CD4-positive, alpha-beta memory T cell (primary cell): ENCODE measurements at regions of chr6 and their contacts with region 1.

Region 1: GRCh38 chr6:166402582-166403277 is 20.0 kb upstream of the MPC1 start:
- DNase-seq: no peak
- H3K4me3 ChIP-seq: no peak overlapping the region
- H3K4me3 Mint-ChIP-seq: no peak overlapping the region
- H3K27ac ChIP-seq: no peak overlapping the region
- H3K27ac Mint-ChIP-seq: peak overlapping the region in 3 of 7 donors; percentile 43 to 72 (median 67)
- H3K4me1 ChIP-seq: no peaks in the 10 kb centered on the region
- H3K4me1 Mint-ChIP-seq: peaks cover 4 to 9% (median 7%) of the 10 kb centered on the region in 4 donors
- H3K27me3 ChIP-seq: no peaks in the 10 kb centered on the region
- H3K27me3 Mint-ChIP-seq: no peaks in the 10 kb centered on the region

Region 2: DNA sequence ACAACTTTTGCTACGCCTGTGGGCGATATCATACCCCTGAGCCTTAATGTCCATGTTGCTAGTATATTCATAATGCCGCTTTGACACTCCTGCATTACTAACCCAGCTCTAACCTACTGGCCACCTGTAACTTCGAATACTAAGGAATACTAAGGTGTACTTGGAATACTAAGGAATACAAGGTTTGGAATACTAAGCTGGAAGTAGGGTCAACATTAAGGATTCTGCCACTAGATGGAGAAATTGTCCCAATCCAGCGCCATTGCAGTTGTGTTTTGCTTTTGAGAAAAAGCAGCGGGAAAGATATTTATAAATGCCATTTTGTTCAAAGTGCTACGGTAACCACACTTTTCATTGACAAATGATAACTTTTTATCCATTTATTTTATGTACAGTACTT is 245.8 kb before region 1 on chr6:
- CTCF ChIA-PET with region 1: interaction called, 20 read pairs
- POLR2A ChIA-PET with region 1: interaction called, 3 read pairs
- intact Hi-C with region 1: loop called (anchors 2 kb)
- DNase-seq: no peak
- H3K4me3 ChIP-seq: no peak overlapping the region
- H3K4me3 Mint-ChIP-seq: no peak overlapping the region
- H3K27ac ChIP-seq: no peak overlapping the region
- H3K27ac Mint-ChIP-seq: no peak overlapping the region
- H3K4me1 ChIP-seq: no peaks in the 10 kb centered on the region
- H3K4me1 Mint-ChIP-seq: no peaks in the 10 kb centered on the region
- H3K27me3 ChIP-seq: no peaks in the 10 kb centered on the region
- H3K27me3 Mint-ChIP-seq: peaks cover 11 to 12% of the 10 kb centered on the region in 2 donors

Region 3: GRCh38 chr6:166275714-166276166 is 127.0 kb before region 1 on chr6:
- CTCF ChIA-PET with region 1: interaction called, 75 read pairs
- POLR2A ChIA-PET with region 1: no interaction called
- intact Hi-C with region 1: loop called (anchors 1 kb)
- DNase-seq: peak; percentile 57 to 84 (median 77)
- H3K4me3 ChIP-seq: no peak overlapping the region
- H3K4me3 Mint-ChIP-seq: no peak overlapping the region
- H3K27ac ChIP-seq: no peak overlapping the region
- H3K27ac Mint-ChIP-seq: peak overlapping the region in 1 of 7 donors; percentile 66
- H3K4me1 ChIP-seq: peaks cover 4% of the 10 kb centered on the region
- H3K4me1 Mint-ChIP-seq: peaks cover 0 to 8% (median 6%) of the 10 kb centered on the region in 4 donors
- H3K27me3 ChIP-seq: no peaks in the 10 kb centered on the region
- H3K27me3 Mint-ChIP-seq: peaks cover 0 to 3% of the 10 kb centered on the region in 2 donors

Region 4: DNA sequence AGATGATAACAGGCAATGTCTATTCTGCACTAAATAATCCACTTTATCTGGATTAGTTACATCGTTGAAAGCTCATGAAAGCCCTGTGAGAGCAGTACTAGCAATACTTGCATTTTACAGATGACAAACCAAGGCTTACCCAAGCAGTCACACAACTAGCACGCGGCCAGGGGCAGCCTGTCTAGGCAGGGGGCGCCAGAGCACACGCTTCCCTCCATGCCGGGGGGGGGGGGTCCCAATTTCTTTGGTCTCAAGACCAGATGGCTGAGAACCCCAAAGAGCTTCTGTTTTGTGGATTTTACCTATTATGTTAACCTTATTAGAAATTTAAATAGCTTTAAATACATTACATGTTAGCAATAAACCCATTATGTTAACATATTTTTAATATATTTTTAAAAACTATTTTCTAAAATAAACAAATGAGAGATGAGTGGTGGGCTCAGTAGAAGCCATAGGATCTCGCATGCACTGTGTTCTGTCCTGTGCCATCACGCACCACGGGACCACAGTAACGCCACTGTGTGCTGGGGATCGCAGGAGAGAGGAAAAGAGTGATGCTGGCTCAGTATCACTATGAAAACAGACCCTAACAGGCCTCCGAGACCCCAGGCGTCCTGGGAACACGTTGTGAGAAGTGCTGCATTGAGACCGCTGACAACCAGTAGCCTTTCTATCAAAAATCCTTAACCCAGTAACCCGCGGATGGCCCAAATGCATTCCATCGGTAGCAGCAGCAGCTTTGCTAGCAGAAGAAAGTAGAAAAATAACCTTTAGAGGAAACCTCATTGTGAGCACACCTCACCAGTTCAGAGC is 89.3 kb before region 1 on chr6:
- CTCF ChIA-PET with region 1: interaction called, 104 read pairs
- POLR2A ChIA-PET with region 1: interaction called, 5 read pairs
- intact Hi-C with region 1: loop called (anchors 1 kb)
- DNase-seq: peak in 4 of 5 donors; percentile 8 to 55 (median 32)
- H3K4me3 ChIP-seq: no peak overlapping the region
- H3K4me3 Mint-ChIP-seq: no peak overlapping the region
- H3K27ac ChIP-seq: no peak overlapping the region
- H3K27ac Mint-ChIP-seq: no peak overlapping the region
- H3K4me1 ChIP-seq: peaks cover 3% of the 10 kb centered on the region
- H3K4me1 Mint-ChIP-seq: peaks cover 0 to 6% (median 2%) of the 10 kb centered on the region in 4 donors
- H3K27me3 ChIP-seq: peaks cover 6% of the 10 kb centered on the region
- H3K27me3 Mint-ChIP-seq: peaks cover 7 to 15% of the 10 kb centered on the region in 2 donors

Region 5: DNA sequence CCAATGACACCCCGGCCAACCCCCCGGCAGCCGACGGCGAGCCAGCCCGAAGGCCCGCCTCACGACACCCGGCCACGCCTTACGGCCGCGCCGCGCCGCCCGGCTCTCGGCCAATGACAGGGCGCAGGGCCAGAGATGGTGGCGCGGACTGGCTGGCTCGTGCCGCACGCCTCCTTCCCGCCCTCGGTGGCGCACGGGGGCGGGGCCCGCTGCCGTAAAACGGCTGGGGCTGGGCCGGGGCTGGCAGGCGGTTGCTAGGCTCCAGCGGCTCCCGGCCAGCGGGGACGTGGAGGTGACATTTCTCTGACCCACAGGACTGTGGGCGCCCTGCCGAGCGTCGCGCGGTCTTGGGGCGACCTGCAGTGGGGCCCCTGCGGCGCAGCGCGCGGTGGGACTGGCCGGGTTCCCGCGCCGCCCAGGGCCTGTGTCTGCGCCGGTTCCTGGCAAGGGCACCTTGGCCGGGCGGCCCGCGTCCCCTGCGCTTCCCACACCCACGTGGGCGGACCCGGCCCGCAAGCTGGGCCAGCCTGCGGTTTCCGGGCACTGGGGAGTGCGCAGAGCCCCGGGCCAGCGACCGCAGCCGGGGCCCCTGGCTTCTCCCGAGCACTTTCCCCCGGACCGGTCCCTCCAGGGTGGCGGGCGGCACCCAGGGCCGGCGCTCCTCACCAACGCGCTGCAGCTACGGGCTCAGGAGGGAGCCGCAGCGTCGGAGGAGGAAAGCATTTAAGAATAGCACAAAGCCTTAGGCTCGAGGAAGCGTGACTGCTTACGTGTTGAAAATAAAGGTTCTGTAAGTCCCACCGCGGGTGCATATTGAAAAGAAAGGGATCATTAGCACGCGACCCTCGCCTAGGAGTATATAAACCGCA is 19.6 kb before region 1 on chr6 and contains the start of gene MPC1:
- CTCF ChIA-PET with region 1: interaction called, 44 read pairs
- POLR2A ChIA-PET with region 1: interaction called, 5 read pairs
- intact Hi-C with region 1: loop called (anchors 1 kb)
- DNase-seq: peak; percentile 93 to 95 (median 94)
- H3K4me3 ChIP-seq: peak within 1 kb of the TSS; percentile 63 to 75
- H3K4me3 Mint-ChIP-seq: peak within 1 kb of the TSS; percentile 89 to 96 (median 93)
- H3K27ac ChIP-seq: peak within 1 kb of the TSS; percentile 77
- H3K27ac Mint-ChIP-seq: peak within 1 kb of the TSS; percentile 92 to 97 (median 93)
- H3K4me1 ChIP-seq: peaks cover 6% of the 10 kb centered on the region
- H3K4me1 Mint-ChIP-seq: peaks cover 5 to 22% (median 7%) of the 10 kb centered on the region in 4 donors
- H3K27me3 ChIP-seq: no peaks in the 10 kb centered on the region
- H3K27me3 Mint-ChIP-seq: no peaks in the 10 kb centered on the region
- total RNA-seq, gene MPC1: 33.1 to 34.7 TPM

Region 6: GRCh38 chr6:166435574-166435973 is 32.8 kb after region 1 on chr6:
- CTCF ChIA-PET with region 1: interaction called, 19 read pairs
- POLR2A ChIA-PET with region 1: no interaction called
- intact Hi-C with region 1: no loop called
- DNase-seq: peak; percentile 26 to 58 (median 43)
- H3K4me3 ChIP-seq: no peak overlapping the region
- H3K4me3 Mint-ChIP-seq: peak overlapping the region in 3 of 8 donors; percentile 26 to 83 (median 36)
- H3K27ac ChIP-seq: no peak overlapping the region
- H3K27ac Mint-ChIP-seq: peak overlapping the region in 6 of 7 donors; percentile 9 to 89 (median 72)
- H3K4me1 ChIP-seq: peaks cover 23% of the 10 kb centered on the region
- H3K4me1 Mint-ChIP-seq: peaks cover 16 to 33% (median 26%) of the 10 kb centered on the region in 4 donors
- H3K27me3 ChIP-seq: no peaks in the 10 kb centered on the region
- H3K27me3 Mint-ChIP-seq: no peaks in the 10 kb centered on the region

Region 7: DNA sequence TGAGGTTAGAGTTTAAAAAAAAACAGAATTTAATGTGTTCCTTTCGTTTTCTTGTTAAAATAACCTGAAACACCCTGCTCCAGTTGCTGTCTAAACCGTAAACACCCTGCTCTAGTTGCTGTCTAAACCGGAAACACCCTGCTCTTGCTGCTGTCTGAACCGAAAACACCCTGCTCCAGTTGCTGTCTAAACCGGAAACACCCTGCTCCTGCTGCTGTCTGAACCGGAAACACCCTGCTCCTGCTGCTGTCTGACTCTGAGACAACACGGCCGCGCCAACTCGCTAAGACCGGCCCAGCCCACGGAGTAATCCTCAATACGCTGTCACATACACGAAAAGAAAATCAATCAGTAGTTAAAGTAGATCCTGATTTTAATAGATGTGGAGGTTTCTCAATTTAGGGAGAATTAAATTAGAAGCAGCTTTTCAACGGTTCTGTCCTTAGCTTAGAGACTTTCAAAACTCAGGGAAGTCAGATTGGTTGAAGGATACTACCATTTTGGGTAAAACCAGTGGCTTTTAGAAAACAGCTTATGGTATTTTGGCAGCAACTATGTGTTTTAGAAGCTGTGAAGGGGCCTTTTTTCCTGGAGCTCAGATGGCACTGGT is 85.5 kb after region 1 on chr6:
- CTCF ChIA-PET with region 1: interaction called, 10 read pairs
- POLR2A ChIA-PET with region 1: interaction called, 5 read pairs
- intact Hi-C with region 1: no loop called
- DNase-seq: peak; percentile 79 to 92 (median 85)
- H3K4me3 ChIP-seq: peak overlapping the region in 1 of 2 donors; percentile 39
- H3K4me3 Mint-ChIP-seq: peak overlapping the region; percentile 69 to 89 (median 82)
- H3K27ac ChIP-seq: peak overlapping the region; percentile 61
- H3K27ac Mint-ChIP-seq: peak overlapping the region; percentile 83 to 99 (median 92)
- H3K4me1 ChIP-seq: peaks cover 24% of the 10 kb centered on the region
- H3K4me1 Mint-ChIP-seq: peaks cover 17 to 37% (median 30%) of the 10 kb centered on the region in 4 donors
- H3K27me3 ChIP-seq: no peaks in the 10 kb centered on the region
- H3K27me3 Mint-ChIP-seq: no peaks in the 10 kb centered on the region